ENCODE measurements at regions of chr17 and their contacts with region 1.

Region 1: GRCh38 chr17:48954300-48954755 is 9.7 kb upstream of the SNF8 start:
- DNase-seq: peak in 1 of 2 experiments; percentile 70
- H3K4me3 ChIP-seq: no peak overlapping the region
- H3K27ac ChIP-seq: no peak overlapping the region
- H3K4me1 ChIP-seq: peaks cover 0 to 5% (median 3%) of the 10 kb centered on the region in 4 experiments; a peak in 3 of 7 replicates
- H3K27me3 ChIP-seq: no peaks in the 10 kb centered on the region
- CTCF ChIP-seq: peak; percentile 77 to 81 (median 80)
- EP300 ChIP-seq: no peak
- POLR2A ChIP-seq: no peak
- RAD21 ChIP-seq: peak; percentile 89 to 95

Region 2: GRCh38 chr17:48970224-48970623 is 15.9 kb after region 1 on chr17:
- CTCF ChIA-PET with region 1: interaction called, 33 read pairs
- POLR2A ChIA-PET with region 1: interaction called, 38 read pairs
- DNase-seq: no peak
- H3K4me3 ChIP-seq: no peak overlapping the region
- H3K27ac ChIP-seq: no peak overlapping the region
- H3K4me1 ChIP-seq: peaks cover 2 to 12% (median 8%) of the 10 kb centered on the region in 4 experiments
- H3K27me3 ChIP-seq: peaks cover 0 to 2% (median 0%) of the 10 kb centered on the region in 4 experiments; a peak in 1 of 7 replicates
- CTCF ChIP-seq: no peak
- EP300 ChIP-seq: no peak
- POLR2A ChIP-seq: no peak
- RAD21 ChIP-seq: no peak

Region 3: DNA sequence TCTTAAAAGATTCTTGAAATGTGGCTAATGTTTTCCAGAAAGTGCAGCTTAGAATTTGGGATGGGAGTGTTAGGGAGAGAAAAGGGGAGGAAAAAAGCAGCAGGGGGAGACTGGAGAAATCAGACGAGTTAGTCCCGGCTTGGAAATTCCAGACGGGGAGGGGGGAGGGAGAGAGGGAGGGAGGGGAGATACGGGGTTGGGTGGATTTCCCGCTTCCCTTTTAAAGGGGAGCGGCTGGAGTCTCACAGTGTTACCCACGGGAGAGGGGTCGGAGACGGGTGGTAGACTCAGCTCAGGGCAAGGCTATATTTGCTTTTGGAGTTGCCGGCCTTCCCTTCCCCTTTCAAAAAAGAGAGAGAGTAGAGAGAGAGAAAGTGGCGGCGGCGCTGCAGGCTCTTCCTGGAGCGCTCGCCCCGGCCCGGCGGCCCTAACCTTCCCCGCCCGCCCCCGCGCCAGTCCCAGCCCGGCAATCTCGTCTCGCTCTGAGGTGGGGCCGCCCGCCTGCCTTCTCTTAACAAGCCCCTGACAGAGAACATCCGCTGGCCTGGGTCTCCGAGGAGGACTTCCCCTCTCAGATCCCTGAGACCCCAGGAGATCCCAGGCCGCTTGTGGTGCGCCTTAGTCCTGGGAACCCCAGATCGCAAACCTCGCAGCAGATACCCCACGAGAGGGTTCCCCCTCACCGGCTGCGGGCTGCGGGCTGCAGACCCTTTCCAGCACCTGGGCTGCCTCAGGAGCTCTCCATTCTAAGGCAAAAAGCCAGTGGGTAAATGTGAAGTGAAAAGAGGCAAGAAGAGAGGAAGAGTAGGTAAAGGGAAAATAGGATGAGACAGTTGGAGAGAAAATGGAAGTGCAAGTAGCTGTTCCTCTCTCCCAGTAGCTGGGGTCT is 49.5 kb after region 1 on chr17:
- CTCF ChIA-PET with region 1: interaction called, 12 read pairs
- POLR2A ChIA-PET with region 1: interaction called, 9 read pairs
- DNase-seq: peak in 1 of 2 experiments; percentile 67
- H3K4me3 ChIP-seq: peak overlapping the region; percentile 34 to 91 (median 46); a peak in 7 of 8 replicates
- H3K27ac ChIP-seq: no peak overlapping the region
- H3K4me1 ChIP-seq: peaks cover 1 to 25% (median 19%) of the 10 kb centered on the region in 4 experiments; a peak in 6 of 7 replicates
- H3K27me3 ChIP-seq: no peaks in the 10 kb centered on the region
- CTCF ChIP-seq: no peak
- EP300 ChIP-seq: no peak
- POLR2A ChIP-seq: no peak; a peak in 1 of 3 replicates
- RAD21 ChIP-seq: no peak; a peak in 2 of 4 replicates

Region 4: GRCh38 chr17:49016788-49017463 is 62.6 kb after region 1 on chr17:
- CTCF ChIA-PET with region 1: interaction called, 18 read pairs
- POLR2A ChIA-PET with region 1: interaction called, 4 read pairs
- DNase-seq: peak in 1 of 2 experiments; percentile 46
- H3K4me3 ChIP-seq: no peak overlapping the region
- H3K27ac ChIP-seq: no peak overlapping the region
- H3K4me1 ChIP-seq: peaks cover 28 to 51% (median 40%) of the 10 kb centered on the region in 4 experiments
- H3K27me3 ChIP-seq: no peaks in the 10 kb centered on the region
- CTCF ChIP-seq: no peak
- EP300 ChIP-seq: no peak
- POLR2A ChIP-seq: no peak
- RAD21 ChIP-seq: no peak

Measured in H1 (cell line).